Colonic mucosa (tissue), 4 donors: ENCODE measurements at regions of chr4 and their contacts with region 1.

Region 1: GRCh38 chr4:178316211-178316610 is 874.0 kb upstream of the AGA start:
- DNase-seq: peak; percentile 29
- H3K4me3 ChIP-seq: no peak overlapping the region
- H3K27ac ChIP-seq: no peak overlapping the region
- H3K4me1 ChIP-seq: no peaks in the 10 kb centered on the region
- H3K27me3 ChIP-seq: no peaks in the 10 kb centered on the region
- CTCF ChIP-seq: no peak

Region 2: GRCh38 chr4:177596035-177596434 is 720.2 kb before region 1 on chr4:
- intact Hi-C with region 1: no loop called
- DNase-seq: no peak
- H3K4me3 ChIP-seq: no peak overlapping the region
- H3K27ac ChIP-seq: no peak overlapping the region
- H3K4me1 ChIP-seq: no peaks in the 10 kb centered on the region
- H3K27me3 ChIP-seq: no peaks in the 10 kb centered on the region
- CTCF ChIP-seq: no peak

Region 3: GRCh38 chr4:177957596-177957995 is 358.6 kb before region 1 on chr4:
- intact Hi-C with region 1: loop called (anchors 10 kb)
- DNase-seq: no peak
- H3K4me3 ChIP-seq: no peak overlapping the region
- H3K27ac ChIP-seq: no peak overlapping the region
- H3K4me1 ChIP-seq: no peaks in the 10 kb centered on the region
- H3K27me3 ChIP-seq: no peaks in the 10 kb centered on the region
- CTCF ChIP-seq: no peak

Region 4: GRCh38 chr4:177986236-177986635 is 330.0 kb before region 1 on chr4:
- intact Hi-C with region 1: no loop called
- DNase-seq: no peak
- H3K4me3 ChIP-seq: no peak overlapping the region
- H3K27ac ChIP-seq: no peak overlapping the region
- H3K4me1 ChIP-seq: no peaks in the 10 kb centered on the region
- H3K27me3 ChIP-seq: no peaks in the 10 kb centered on the region
- CTCF ChIP-seq: no peak